Heart left ventricle (tissue), 16 donors: ENCODE measurements at regions of chr5 and their contacts with region 1.

Region 1: DNA sequence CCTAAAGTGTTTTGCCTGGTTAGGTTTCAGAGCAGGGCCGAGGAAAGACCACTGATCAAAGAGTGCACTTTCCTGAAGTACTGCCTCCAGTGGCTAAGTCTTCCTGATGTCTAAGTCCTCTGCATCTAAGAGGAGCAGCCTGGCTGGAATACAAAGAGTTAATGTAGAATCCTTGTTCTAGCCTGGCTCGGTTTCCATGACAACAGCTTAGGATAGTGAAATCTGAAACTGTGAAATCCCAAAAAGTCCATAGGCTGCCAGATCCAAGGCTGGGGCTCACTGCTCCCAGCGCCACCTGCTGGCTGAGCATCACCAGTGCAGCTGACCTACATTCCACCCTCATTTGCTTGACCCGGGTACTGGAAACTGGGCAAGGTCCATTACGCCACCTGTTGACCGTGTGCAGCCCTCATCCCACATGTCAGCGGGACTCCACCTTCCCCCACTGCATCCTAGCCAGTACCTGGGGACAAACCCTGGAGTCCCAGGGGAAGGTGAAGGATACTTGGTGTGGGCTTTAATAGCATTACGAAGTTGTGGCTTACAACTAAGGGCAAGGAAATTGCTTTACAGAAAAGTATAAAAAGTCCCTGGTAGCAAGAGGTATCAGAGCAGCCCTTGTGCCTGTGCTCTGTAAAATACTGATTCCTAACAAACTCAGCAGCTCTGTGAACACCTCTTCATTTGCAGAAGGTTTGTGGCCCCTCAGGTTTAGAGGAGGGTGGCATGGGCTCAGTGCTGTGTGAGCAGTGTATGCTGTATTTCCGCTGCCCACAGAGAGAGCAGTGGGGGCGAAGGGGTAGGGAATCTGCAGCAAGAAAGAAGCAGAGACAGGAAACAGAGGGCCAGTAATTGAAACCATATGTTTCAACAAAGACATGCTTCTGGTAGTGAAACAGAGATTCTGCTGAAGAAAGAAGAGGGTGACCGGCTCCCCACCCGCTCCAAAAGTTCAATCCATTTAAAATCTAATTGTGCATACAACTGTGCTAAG is 36.0 kb downstream of the PCDHGC5 start:
- DNase-seq: peak; percentile 88 to 91 (median 88)
- ATAC-seq: peak; percentile 53 to 73 (median 64)
- H3K4me3 ChIP-seq: no peak overlapping the region
- H3K27ac ChIP-seq: peak overlapping the region in 11 of 12 donors; percentile 38 to 95 (median 75)
- H3K4me1 ChIP-seq: peaks cover 12 to 77% (median 66%) of the 10 kb centered on the region in 12 donors
- H3K27me3 ChIP-seq: no peaks in the 10 kb centered on the region
- CTCF ChIP-seq: peak; percentile 98 to 100 (median 100)
- POLR2A ChIP-seq: no peak

Region 2: DNA sequence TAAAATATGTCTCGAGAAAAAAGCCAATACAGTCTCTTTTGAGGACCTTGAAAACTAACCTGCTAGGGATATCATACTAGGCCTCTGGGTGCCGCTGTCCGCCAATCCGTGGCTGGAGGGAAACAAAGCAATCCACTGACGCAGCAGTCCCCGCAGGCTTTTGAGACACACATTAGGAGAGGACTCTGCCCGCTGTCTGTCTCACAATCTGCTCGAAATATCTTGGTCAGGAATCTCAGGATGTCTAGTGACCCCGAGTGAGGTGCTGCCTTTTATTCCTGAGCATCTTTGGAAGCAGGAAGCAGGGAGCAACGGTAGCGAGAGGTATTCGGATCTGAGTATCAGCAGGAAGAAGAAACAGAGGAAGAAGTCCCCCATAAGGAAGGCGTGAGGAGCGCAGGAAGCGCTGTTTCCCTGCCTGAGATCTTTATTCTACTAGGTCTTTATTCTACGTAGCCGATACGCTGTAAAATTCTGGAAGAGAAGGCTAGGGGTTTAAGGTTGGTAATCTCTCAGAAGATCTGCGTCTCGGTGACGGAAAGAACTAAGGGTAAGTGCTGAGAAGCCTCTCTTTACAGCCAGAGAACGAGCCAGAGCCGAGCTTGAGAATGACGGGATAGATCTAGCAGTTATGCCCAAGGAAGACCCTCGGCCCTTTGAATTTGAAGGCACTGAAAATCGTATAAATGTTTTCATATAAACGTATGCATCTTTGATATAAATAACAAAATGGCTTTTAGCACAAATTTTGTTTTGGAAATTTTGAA is 198.6 kb before region 1 on chr5:
- intact Hi-C with region 1: loop called in 2 of 10 experiments (anchors 10 kb)
- DNase-seq: peak; percentile 63 to 82 (median 74)
- ATAC-seq: peak; percentile 77 to 94 (median 92)
- H3K4me3 ChIP-seq: peak overlapping the region; percentile 14 to 63 (median 52)
- H3K27ac ChIP-seq: peak overlapping the region; percentile 36 to 84 (median 76)
- H3K4me1 ChIP-seq: peaks cover 0 to 9% (median 1%) of the 10 kb centered on the region in 12 donors
- H3K27me3 ChIP-seq: peaks cover 0 to 10% (median 0%) of the 10 kb centered on the region in 9 donors
- CTCF ChIP-seq: peak; percentile 37 to 71 (median 56)
- POLR2A ChIP-seq: peak in 1 of 2 donors; percentile 50

Region 3: GRCh38 chr5:141349917-141350619 is 174.8 kb before region 1 on chr5 and contains the start of gene PCDHGB1:
- intact Hi-C with region 1: loop called in 1 of 10 experiments (anchors 10 kb)
- DNase-seq: peak in 3 of 5 donors; percentile 52 to 71 (median 70)
- ATAC-seq: peak; percentile 71 to 83 (median 80)
- H3K4me3 ChIP-seq: peak within 1 kb of the TSS in 9 of 12 donors; percentile 17 to 39 (median 31)
- H3K27ac ChIP-seq: peak within 1 kb of the TSS in 2 of 12 donors; percentile 30 to 41
- H3K4me1 ChIP-seq: peaks cover 0 to 19% (median 2%) of the 10 kb centered on the region in 12 donors
- H3K27me3 ChIP-seq: peaks cover 0 to 21% (median 0%) of the 10 kb centered on the region in 9 donors
- CTCF ChIP-seq: peak; percentile 31 to 70 (median 49)
- POLR2A ChIP-seq: no peak
- total RNA-seq, gene PCDHGB1: 4.4 to 11.9 (median 8.6) TPM

Region 4: DNA sequence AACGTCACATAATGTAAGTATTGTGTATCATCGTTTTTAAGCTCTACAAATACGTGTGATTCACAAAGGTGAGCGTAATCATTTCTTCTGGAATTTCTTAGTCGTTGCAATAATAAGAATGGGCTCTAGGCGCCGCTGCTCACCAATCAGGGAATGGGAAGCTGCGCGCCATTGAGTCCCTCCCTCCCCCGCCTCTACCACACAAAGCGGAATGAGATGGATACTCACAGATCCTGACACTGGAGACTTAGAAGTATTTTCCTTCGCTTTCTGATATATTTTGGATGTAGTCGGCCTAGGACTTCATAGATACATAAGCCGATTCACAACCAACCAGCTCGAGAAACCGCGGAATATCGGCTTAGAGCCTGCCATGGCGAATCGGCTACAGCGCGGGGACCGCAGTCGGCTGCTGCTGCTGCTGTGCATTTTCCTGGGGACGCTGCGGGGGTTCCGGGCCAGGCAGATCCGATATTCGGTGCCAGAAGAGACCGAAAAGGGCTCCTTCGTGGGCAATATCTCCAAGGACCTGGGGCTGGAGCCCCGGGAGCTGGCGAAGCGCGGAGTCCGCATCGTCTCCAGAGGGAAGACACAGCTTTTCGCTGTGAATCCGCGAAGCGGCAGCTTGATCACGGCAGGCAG is 103.9 kb before region 1 on chr5 and contains the start of gene PCDHGA11:
- intact Hi-C with region 1: loop called (anchors 2 to 10 kb)
- DNase-seq: peak in 3 of 5 donors; percentile 40 to 64 (median 61)
- ATAC-seq: peak in 2 of 4 donors; percentile 52 to 62
- H3K4me3 ChIP-seq: peak within 1 kb of the TSS in 10 of 12 donors; percentile 9 to 45 (median 40)
- H3K27ac ChIP-seq: no peak within 1 kb of the TSS
- H3K4me1 ChIP-seq: peaks cover 0 to 12% (median 1%) of the 10 kb centered on the region in 12 donors
- H3K27me3 ChIP-seq: peaks cover 0 to 76% (median 0%) of the 10 kb centered on the region in 9 donors
- CTCF ChIP-seq: peak; percentile 28 to 57 (median 48)
- POLR2A ChIP-seq: no peak
- total RNA-seq, gene PCDHGA11: 2.8 to 9.0 (median 5.3) TPM

Region 5: GRCh38 chr5:141475625-141476131 is 49.2 kb before region 1 on chr5 and contains the start of gene PCDHGC3:
- intact Hi-C with region 1: loop called in 6 of 10 experiments (anchors 2 to 10 kb)
- DNase-seq: peak; percentile 92 to 96 (median 93)
- ATAC-seq: peak; percentile 98 to 99 (median 99)
- H3K4me3 ChIP-seq: peak within 1 kb of the TSS; percentile 22 to 74 (median 64)
- H3K27ac ChIP-seq: peak within 1 kb of the TSS; percentile 74 to 94 (median 86)
- H3K4me1 ChIP-seq: peaks cover 4 to 50% (median 38%) of the 10 kb centered on the region in 12 donors
- H3K27me3 ChIP-seq: peaks cover 0 to 42% (median 0%) of the 10 kb centered on the region in 9 donors
- CTCF ChIP-seq: peak; percentile 14 to 69 (median 49)
- POLR2A ChIP-seq: peak in 1 of 2 donors; percentile 69
- total RNA-seq, gene PCDHGC3: 12.3 to 32.5 (median 18.4) TPM